T-cell (primary cell): ENCODE measurements at regions of chr2 and their contacts with region 1.

Region 1: DNA sequence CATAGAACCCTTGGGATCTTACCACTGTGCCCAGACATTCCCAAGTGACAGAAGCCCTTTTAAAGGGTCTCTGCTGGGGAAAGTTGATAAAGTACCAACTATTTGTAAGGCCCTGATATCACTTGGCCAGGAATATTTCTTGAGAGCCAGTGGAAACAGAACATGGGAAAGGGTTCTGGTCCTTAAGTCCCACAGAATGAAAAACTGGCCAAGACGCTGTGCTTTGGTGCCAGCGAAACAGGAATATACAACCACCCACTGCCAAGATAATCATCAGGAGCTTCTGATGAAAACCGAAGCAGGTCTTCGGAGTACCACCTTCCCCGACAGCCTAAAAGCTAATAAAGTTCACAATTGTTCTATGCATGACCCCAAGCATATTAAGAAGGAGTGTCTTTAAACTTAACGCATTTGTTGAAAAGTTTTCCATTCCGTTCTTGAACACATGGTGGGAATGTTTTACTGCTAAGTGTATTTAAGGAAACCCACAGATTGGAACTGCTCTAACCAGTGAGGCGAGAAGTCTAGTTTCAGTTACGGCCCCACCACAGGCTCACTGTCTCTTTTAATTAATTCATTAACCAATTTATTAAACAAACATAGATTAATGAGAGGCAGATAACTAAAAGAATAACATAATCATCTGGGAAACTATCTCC is 152.6 kb downstream of the ANKRD44 start:
- DNase-seq: no peak
- ATAC-seq: no peak
- H3K4me3 ChIP-seq: no peak overlapping the region
- H3K4me3 Mint-ChIP-seq: no peak overlapping the region
- H3K27ac ChIP-seq: no peak overlapping the region
- H3K27ac Mint-ChIP-seq: peak overlapping the region; percentile 82 to 90
- H3K4me1 ChIP-seq: peaks cover 32 to 34% of the 10 kb centered on the region in 2 experiments
- H3K4me1 Mint-ChIP-seq: peaks cover 82 to 86% (median 85%) of the 10 kb centered on the region in 3 donors
- H3K27me3 ChIP-seq: no peaks in the 10 kb centered on the region
- H3K27me3 Mint-ChIP-seq: no peaks in the 10 kb centered on the region

Region 2: GRCh38 chr2:197079832-197080555 is 78.0 kb before region 1 on chr2:
- CTCF ChIA-PET with region 1: no interaction called
- POLR2A ChIA-PET with region 1: no interaction called
- DNase-seq: no peak
- ATAC-seq: no peak
- H3K4me3 ChIP-seq: no peak overlapping the region
- H3K4me3 Mint-ChIP-seq: no peak overlapping the region
- H3K27ac ChIP-seq: no peak overlapping the region
- H3K27ac Mint-ChIP-seq: peak overlapping the region in 1 of 2 donors; percentile 62
- H3K4me1 ChIP-seq: no peaks in the 10 kb centered on the region
- H3K4me1 Mint-ChIP-seq: peaks cover 6 to 10% (median 7%) of the 10 kb centered on the region in 3 donors
- H3K27me3 ChIP-seq: no peaks in the 10 kb centered on the region
- H3K27me3 Mint-ChIP-seq: no peaks in the 10 kb centered on the region

Region 3: DNA sequence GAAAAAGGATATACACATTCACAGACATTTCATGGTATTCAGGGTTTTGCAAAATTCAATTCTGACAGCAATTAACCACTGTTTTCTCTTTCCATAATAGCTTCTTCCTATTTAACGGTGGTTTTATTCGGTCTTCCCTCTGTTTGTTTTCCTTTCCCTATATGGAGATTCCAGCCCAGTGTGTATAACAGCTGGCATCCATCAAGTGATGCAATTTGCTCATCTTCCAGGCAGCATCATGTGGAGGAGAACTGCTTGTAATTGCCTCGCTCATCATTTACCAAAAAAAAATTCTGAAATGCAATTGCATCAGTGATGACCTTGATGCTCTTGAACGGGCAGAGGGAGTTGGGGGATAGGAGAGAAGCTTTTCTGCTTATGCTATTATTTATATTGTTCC is 65.6 kb before region 1 on chr2:
- CTCF ChIA-PET with region 1: no interaction called
- POLR2A ChIA-PET with region 1: interaction called in 1 of 2 experiments, 28 read pairs
- DNase-seq: no peak
- ATAC-seq: no peak
- H3K4me3 ChIP-seq: no peak overlapping the region
- H3K4me3 Mint-ChIP-seq: no peak overlapping the region
- H3K27ac ChIP-seq: no peak overlapping the region
- H3K27ac Mint-ChIP-seq: no peak overlapping the region
- H3K4me1 ChIP-seq: peaks cover 0 to 3% of the 10 kb centered on the region in 2 experiments
- H3K4me1 Mint-ChIP-seq: peaks cover 24 to 32% (median 31%) of the 10 kb centered on the region in 3 donors
- H3K27me3 ChIP-seq: no peaks in the 10 kb centered on the region
- H3K27me3 Mint-ChIP-seq: no peaks in the 10 kb centered on the region

Region 4: GRCh38 chr2:197356136-197356535 is 198.1 kb after region 1 on chr2:
- CTCF ChIA-PET with region 1: no interaction called
- POLR2A ChIA-PET with region 1: interaction called in 1 of 2 experiments, 13 read pairs
- DNase-seq: peak in 4 of 35 experiments; percentile 1 to 41 (median 6)
- ATAC-seq: peak in 3 of 4 experiments; percentile 42 to 69 (median 45)
- H3K4me3 ChIP-seq: no peak overlapping the region
- H3K4me3 Mint-ChIP-seq: peak overlapping the region; percentile 16 to 47 (median 28)
- H3K27ac ChIP-seq: no peak overlapping the region
- H3K27ac Mint-ChIP-seq: peak overlapping the region in 1 of 2 donors; percentile 50
- H3K4me1 ChIP-seq: peaks cover 3 to 4% of the 10 kb centered on the region in 2 experiments
- H3K4me1 Mint-ChIP-seq: peaks cover 24 to 25% (median 24%) of the 10 kb centered on the region in 3 donors
- H3K27me3 ChIP-seq: no peaks in the 10 kb centered on the region
- H3K27me3 Mint-ChIP-seq: no peaks in the 10 kb centered on the region